HCT116 (cell line): ENCODE measurements at regions of chr15 and their contacts with region 1.

Region 1: GRCh38 chr15:76460871-76461270 is 124.3 kb downstream of the ISL2 start:
- DNase-seq: no peak
- ATAC-seq: no peak
- H3K4me3 ChIP-seq: no peak overlapping the region
- H3K27ac ChIP-seq: no peak overlapping the region
- H3K4me1 ChIP-seq: no peaks in the 10 kb centered on the region
- H3K27me3 ChIP-seq: no peaks in the 10 kb centered on the region
- CTCF ChIP-seq: no peak
- POLR2A ChIP-seq: no peak
- RAD21 ChIP-seq: no peak

Region 2: DNA sequence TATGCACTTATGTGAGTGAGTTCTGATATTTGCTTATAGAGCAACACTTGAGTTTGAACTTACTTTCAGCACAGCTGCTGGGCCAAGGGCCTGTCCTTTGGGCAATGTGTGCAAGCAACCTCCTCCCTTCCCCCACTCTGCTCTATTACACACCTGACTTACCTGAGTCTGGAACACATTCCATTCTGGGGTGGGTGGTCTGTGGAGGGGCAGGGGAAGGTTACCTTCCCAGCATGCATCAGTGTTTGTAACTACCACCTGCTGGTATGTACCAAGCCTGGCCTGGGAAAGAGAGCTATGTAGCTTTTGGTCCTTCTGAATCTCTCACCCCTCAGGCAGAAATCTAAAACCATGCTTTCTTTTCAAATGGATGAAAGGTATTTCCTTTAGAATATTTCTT is 21.3 kb before region 1 on chr15:
- CTCF ChIA-PET with region 1: no interaction called
- POLR2A ChIA-PET with region 1: no interaction called
- RAD21 ChIA-PET with region 1: no interaction called
- intact Hi-C with region 1: loop called (anchors 2 kb)
- DNase-seq: no peak
- ATAC-seq: no peak
- H3K4me3 ChIP-seq: no peak overlapping the region
- H3K27ac ChIP-seq: no peak overlapping the region
- H3K4me1 ChIP-seq: no peaks in the 10 kb centered on the region
- H3K27me3 ChIP-seq: no peaks in the 10 kb centered on the region
- CTCF ChIP-seq: no peak
- POLR2A ChIP-seq: no peak
- RAD21 ChIP-seq: no peak

Region 3: GRCh38 chr15:76829939-76830338 is 369.1 kb after region 1 on chr15:
- CTCF ChIA-PET with region 1: no interaction called
- POLR2A ChIA-PET with region 1: no interaction called
- RAD21 ChIA-PET with region 1: no interaction called
- intact Hi-C with region 1: no loop called
- DNase-seq: no peak
- ATAC-seq: no peak
- H3K4me3 ChIP-seq: no peak overlapping the region
- H3K27ac ChIP-seq: no peak overlapping the region
- H3K4me1 ChIP-seq: no peaks in the 10 kb centered on the region
- H3K27me3 ChIP-seq: no peaks in the 10 kb centered on the region
- CTCF ChIP-seq: no peak
- POLR2A ChIP-seq: no peak
- RAD21 ChIP-seq: no peak